ENCODE measurements at regions of chr11 and their contacts with region 1.

Region 1: DNA sequence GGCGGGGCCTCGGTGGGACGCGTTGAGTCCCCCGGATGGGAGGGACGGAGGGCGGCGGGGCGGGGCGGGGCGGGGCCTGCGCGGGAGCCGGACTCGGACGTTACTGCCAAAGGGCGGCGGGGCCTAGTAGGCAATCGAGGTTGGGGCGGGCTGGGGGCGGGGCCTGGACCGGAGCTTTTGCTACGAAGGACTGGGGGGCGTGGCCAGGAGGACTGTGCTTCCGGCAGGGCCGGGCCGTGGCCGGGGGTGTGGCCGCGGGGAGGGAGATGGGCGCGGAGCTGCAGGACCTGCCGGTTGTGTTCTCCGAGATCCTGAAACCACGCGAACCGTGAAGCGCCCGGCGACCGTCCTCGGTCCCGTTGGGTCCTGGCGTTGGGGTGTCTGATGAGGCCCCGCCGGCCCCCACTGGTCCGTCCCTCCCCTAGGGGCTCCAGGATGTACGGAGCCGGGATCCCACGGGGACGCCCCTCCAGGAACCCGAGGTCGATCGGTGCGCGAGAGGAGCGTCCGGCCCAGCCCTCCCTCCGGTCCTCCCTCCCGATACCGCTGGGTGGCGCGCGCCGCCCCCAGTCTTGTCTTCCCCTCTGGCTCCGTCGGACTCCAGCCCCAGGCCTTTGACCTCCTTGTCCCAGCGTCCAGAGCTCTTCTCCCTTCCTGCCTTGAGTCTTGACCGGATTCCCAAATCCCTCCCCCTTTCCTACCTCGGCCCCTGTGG is 648 bp upstream of the NUDT8 start:
- DNase-seq: peak; percentile 99

Region 2: DNA sequence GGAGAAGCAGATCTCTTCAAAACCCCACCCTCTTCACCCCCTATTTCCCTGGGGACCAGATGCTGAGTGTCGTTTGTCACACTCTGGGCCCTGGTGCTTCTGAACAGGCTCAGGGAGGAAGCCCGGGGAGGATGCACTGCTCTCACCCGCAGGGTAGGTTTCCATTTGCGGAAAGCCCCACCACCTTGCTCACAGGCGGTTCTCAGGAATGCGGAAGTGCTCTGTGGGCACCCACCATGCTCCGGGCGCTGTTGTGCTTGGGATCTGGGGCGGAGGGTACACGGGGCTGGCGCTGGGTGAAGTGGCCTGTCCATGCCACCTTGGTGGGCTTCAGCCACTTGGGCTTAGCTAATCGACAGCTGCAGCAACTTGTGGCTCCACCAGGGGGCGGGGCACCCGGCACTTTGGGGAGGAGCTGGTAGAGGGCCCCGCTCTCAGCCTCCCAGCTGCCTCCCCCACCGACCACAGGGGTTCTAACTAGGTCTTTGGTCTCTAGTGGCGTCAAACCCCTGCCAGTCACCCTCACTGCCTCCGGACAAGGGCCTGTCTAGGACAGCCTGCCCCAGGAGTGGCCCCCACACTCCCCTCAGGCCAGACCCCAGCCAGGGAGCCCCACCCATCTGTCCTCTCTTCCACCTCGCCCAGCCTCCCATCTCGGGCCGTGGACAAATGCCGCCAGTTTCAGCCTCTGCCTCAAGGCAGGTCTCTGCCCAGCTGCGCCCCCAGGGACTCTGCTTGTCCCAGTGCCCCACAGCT is 16.2 kb before region 1 on chr11:
- CTCF ChIA-PET with region 1: interaction called, 15 read pairs
- POLR2A ChIA-PET with region 1: interaction called, 3 read pairs
- DNase-seq: peak; percentile 66

Region 3: GRCh38 chr11:67651976-67652781 is 21.8 kb after region 1 on chr11:
- CTCF ChIA-PET with region 1: interaction called, 10 read pairs
- POLR2A ChIA-PET with region 1: no interaction called
- DNase-seq: no peak

Measured in HEK293T (cell line).